ENCODE measurements at regions of chr11 and their contacts with region 1.

Region 1: GRCh38 chr11:128831174-128832120 is 35.6 kb downstream of the KCNJ1 start:
- DNase-seq: peak; percentile 79 to 85 (median 83)
- H3K4me3 ChIP-seq: peak overlapping the region in 1 of 2 donors; percentile 12
- H3K4me3 Mint-ChIP-seq: peak overlapping the region; percentile 46 to 91 (median 82)
- H3K27ac ChIP-seq: peak overlapping the region; percentile 76
- H3K27ac Mint-ChIP-seq: peak overlapping the region; percentile 86 to 98 (median 97)
- H3K4me1 ChIP-seq: peaks cover 24% of the 10 kb centered on the region
- H3K4me1 Mint-ChIP-seq: peaks cover 21 to 49% (median 36%) of the 10 kb centered on the region in 4 donors
- H3K27me3 ChIP-seq: no peaks in the 10 kb centered on the region
- H3K27me3 Mint-ChIP-seq: no peaks in the 10 kb centered on the region

Region 2: GRCh38 chr11:127943763-127944162 is 887.7 kb before region 1 on chr11:
- CTCF ChIA-PET with region 1: no interaction called
- POLR2A ChIA-PET with region 1: no interaction called
- intact Hi-C with region 1: no loop called
- DNase-seq: no peak
- H3K4me3 ChIP-seq: no peak overlapping the region
- H3K4me3 Mint-ChIP-seq: no peak overlapping the region
- H3K27ac ChIP-seq: no peak overlapping the region
- H3K27ac Mint-ChIP-seq: no peak overlapping the region
- H3K4me1 ChIP-seq: no peaks in the 10 kb centered on the region
- H3K4me1 Mint-ChIP-seq: no peaks in the 10 kb centered on the region
- H3K27me3 ChIP-seq: no peaks in the 10 kb centered on the region
- H3K27me3 Mint-ChIP-seq: peaks cover 8 to 10% of the 10 kb centered on the region in 2 donors

Region 3: DNA sequence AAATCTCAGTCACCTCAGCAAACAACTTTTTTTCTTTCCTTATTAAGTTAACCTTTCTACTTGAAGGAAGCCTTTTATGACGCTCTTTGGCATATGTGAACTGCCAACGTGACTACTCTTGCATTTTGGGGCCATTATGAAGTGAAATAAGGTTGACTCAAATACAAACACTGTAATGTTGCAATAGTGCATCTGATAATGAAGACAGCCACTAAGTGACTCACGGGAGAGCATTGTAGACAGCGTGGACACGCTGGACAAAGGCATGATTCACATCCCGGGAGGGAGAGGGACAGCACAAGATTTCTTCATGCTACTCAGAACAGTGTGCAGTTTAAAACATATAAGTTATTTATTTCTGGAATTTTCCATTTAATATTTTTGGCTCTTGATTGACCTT is 804.9 kb before region 1 on chr11:
- CTCF ChIA-PET with region 1: interaction called, 15 read pairs
- POLR2A ChIA-PET with region 1: no interaction called
- intact Hi-C with region 1: loop called (anchors 1 kb)
- DNase-seq: no peak
- H3K4me3 ChIP-seq: no peak overlapping the region
- H3K4me3 Mint-ChIP-seq: no peak overlapping the region
- H3K27ac ChIP-seq: no peak overlapping the region
- H3K27ac Mint-ChIP-seq: no peak overlapping the region
- H3K4me1 ChIP-seq: no peaks in the 10 kb centered on the region
- H3K4me1 Mint-ChIP-seq: peaks cover 0 to 4% (median 1%) of the 10 kb centered on the region in 4 donors
- H3K27me3 ChIP-seq: no peaks in the 10 kb centered on the region
- H3K27me3 Mint-ChIP-seq: peaks cover 3 to 4% of the 10 kb centered on the region in 2 donors

Region 4: GRCh38 chr11:128776424-128777284 is 54.8 kb before region 1 on chr11:
- CTCF ChIA-PET with region 1: interaction called, 43 read pairs
- POLR2A ChIA-PET with region 1: interaction called, 6 read pairs
- intact Hi-C with region 1: loop called (anchors 1 kb)
- DNase-seq: peak; percentile 43 to 61 (median 56)
- H3K4me3 ChIP-seq: no peak overlapping the region
- H3K4me3 Mint-ChIP-seq: peak overlapping the region in 4 of 8 donors; percentile 21 to 63 (median 36)
- H3K27ac ChIP-seq: no peak overlapping the region
- H3K27ac Mint-ChIP-seq: peak overlapping the region; percentile 62 to 91 (median 81)
- H3K4me1 ChIP-seq: peaks cover 62% of the 10 kb centered on the region
- H3K4me1 Mint-ChIP-seq: peaks cover 56 to 93% (median 72%) of the 10 kb centered on the region in 4 donors
- H3K27me3 ChIP-seq: no peaks in the 10 kb centered on the region
- H3K27me3 Mint-ChIP-seq: no peaks in the 10 kb centered on the region

Region 5: DNA sequence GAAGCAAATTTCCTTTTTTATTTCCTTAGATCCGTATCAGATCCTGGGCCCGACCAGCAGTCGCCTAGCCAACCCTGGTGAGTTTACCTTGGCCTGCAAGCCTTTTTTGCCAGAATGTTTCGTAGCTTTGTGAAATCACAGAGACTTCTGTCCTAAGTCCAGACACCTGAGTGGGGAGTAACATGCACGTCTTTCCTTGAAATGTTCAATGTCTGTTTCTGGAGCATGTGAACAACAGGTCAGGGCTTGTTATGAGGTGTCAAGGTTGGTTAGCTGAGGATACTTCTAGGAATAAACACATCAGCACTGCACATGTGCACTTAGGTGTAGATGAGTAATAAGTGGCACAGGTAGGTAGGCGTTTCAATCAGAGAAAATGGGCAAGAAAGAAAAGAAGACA is 22.3 kb before region 1 on chr11:
- CTCF ChIA-PET with region 1: interaction called, 30 read pairs
- POLR2A ChIA-PET with region 1: interaction called, 4 read pairs
- intact Hi-C with region 1: no loop called
- DNase-seq: no peak
- H3K4me3 ChIP-seq: no peak overlapping the region
- H3K4me3 Mint-ChIP-seq: no peak overlapping the region
- H3K27ac ChIP-seq: no peak overlapping the region
- H3K27ac Mint-ChIP-seq: peak overlapping the region in 2 of 7 donors; percentile 58 to 65
- H3K4me1 ChIP-seq: no peaks in the 10 kb centered on the region
- H3K4me1 Mint-ChIP-seq: peaks cover 4 to 21% (median 14%) of the 10 kb centered on the region in 4 donors
- H3K27me3 ChIP-seq: no peaks in the 10 kb centered on the region
- H3K27me3 Mint-ChIP-seq: no peaks in the 10 kb centered on the region

Region 6: GRCh38 chr11:128848815-128849455 is 17.5 kb after region 1 on chr11:
- CTCF ChIA-PET with region 1: interaction called, 145 read pairs
- POLR2A ChIA-PET with region 1: interaction called, 27 read pairs
- intact Hi-C with region 1: no loop called
- DNase-seq: peak in 4 of 5 donors; percentile 46 to 62 (median 56)
- H3K4me3 ChIP-seq: no peak overlapping the region
- H3K4me3 Mint-ChIP-seq: peak overlapping the region in 1 of 8 donors; percentile 27
- H3K27ac ChIP-seq: no peak overlapping the region
- H3K27ac Mint-ChIP-seq: peak overlapping the region in 5 of 7 donors; percentile 3 to 78 (median 46)
- H3K4me1 ChIP-seq: peaks cover 35% of the 10 kb centered on the region
- H3K4me1 Mint-ChIP-seq: peaks cover 23 to 42% (median 37%) of the 10 kb centered on the region in 4 donors
- H3K27me3 ChIP-seq: no peaks in the 10 kb centered on the region
- H3K27me3 Mint-ChIP-seq: no peaks in the 10 kb centered on the region

Region 7: DNA sequence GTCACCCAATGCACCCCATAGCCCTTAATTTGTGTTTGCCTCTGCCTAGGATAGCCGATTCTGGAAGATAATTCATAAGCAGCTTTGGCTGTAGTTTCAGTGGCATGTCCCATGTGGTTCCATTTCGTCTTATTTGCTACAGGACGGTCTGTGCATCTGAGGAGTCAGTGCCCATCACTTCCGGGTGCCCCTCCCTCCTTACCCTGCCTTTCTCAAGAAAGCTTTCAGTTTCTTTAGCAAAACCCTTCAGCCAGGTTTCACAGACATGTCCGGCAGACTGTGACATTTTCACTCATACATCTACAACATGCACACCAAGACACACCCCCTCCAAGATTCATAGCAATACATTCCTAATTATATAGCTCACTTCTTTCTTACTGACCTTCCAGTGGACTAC is 97.0 kb after region 1 on chr11:
- CTCF ChIA-PET with region 1: no interaction called
- POLR2A ChIA-PET with region 1: no interaction called
- intact Hi-C with region 1: no loop called
- DNase-seq: peak in 1 of 5 donors; percentile 9
- H3K4me3 ChIP-seq: no peak overlapping the region
- H3K4me3 Mint-ChIP-seq: peak overlapping the region; percentile 17 to 62 (median 46)
- H3K27ac ChIP-seq: no peak overlapping the region
- H3K27ac Mint-ChIP-seq: peak overlapping the region in 3 of 7 donors; percentile 4 to 68 (median 14)
- H3K4me1 ChIP-seq: no peaks in the 10 kb centered on the region
- H3K4me1 Mint-ChIP-seq: peaks cover 9 to 13% (median 11%) of the 10 kb centered on the region in 4 donors
- H3K27me3 ChIP-seq: no peaks in the 10 kb centered on the region
- H3K27me3 Mint-ChIP-seq: peaks cover 2 to 4% of the 10 kb centered on the region in 2 donors

Region 8: DNA sequence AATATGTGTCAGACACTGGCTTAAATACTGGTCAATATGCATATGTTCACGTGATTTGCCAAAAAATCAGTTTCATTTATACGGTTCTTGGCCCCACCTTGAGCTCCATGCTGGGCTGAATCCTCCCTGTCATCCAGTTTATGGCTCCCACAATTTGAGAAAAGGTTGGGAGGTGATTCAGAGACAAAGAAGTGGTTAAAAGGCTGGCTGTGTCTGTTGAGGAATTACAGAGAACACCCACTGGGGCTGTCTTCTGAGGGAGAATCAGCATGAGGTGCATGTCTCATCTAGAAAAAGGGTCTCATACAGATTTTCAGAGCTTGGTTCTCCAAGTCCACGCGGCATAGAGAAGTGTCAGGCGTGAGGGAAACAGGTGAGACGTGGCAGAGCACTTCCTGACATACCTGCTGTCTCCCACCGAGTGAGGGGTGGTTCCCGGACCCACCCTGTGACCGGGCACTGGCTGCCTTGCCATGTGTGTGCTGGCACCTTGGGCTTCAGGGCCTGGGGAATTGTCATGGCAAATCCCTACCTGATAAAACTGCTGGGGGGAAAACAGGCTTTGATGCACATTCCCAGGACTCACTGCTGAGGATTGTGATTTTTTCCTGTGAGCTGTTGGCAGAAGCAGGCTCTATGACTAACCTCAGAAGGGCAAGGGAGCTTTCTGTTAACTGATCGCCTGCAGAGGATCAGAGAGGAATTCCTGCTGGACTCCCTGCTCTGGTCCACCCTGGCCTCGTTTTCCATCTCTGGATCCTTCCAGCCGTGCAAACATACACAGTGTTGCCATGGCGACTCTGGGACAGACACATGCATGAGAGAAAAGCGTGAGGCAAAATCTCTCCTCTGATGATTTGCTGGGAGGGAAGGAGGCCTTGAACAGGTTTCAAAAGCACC is 1840.6 kb after region 1 on chr11:
- CTCF ChIA-PET with region 1: no interaction called
- POLR2A ChIA-PET with region 1: no interaction called
- intact Hi-C with region 1: no loop called
- DNase-seq: no peak
- H3K4me3 ChIP-seq: no peak overlapping the region
- H3K4me3 Mint-ChIP-seq: no peak overlapping the region
- H3K27ac ChIP-seq: no peak overlapping the region
- H3K27ac Mint-ChIP-seq: no peak overlapping the region
- H3K4me1 ChIP-seq: no peaks in the 10 kb centered on the region
- H3K4me1 Mint-ChIP-seq: no peaks in the 10 kb centered on the region
- H3K27me3 ChIP-seq: no peaks in the 10 kb centered on the region
- H3K27me3 Mint-ChIP-seq: peaks cover 5 to 11% of the 10 kb centered on the region in 2 donors